ENCODE measurements at regions of chr10 and their contacts with region 1.

Region 1: GRCh38 chr10:34491678-34492077 is 323.4 kb downstream of the PARD3 start:
- DNase-seq: no peak
- ATAC-seq: no peak
- H3K4me3 ChIP-seq: no peak overlapping the region
- H3K27ac ChIP-seq: no peak overlapping the region
- H3K4me1 ChIP-seq: peaks cover 0 to 9% (median 0%) of the 10 kb centered on the region in 12 donors
- H3K27me3 ChIP-seq: no peaks in the 10 kb centered on the region
- CTCF ChIP-seq: no peak
- POLR2A ChIP-seq: no peak

Region 2: GRCh38 chr10:34384372-34384771 is 107.3 kb before region 1 on chr10:
- intact Hi-C with region 1: no loop called
- DNase-seq: no peak
- ATAC-seq: no peak
- H3K4me3 ChIP-seq: no peak overlapping the region
- H3K27ac ChIP-seq: no peak overlapping the region
- H3K4me1 ChIP-seq: peaks cover 0 to 6% (median 0%) of the 10 kb centered on the region in 12 donors
- H3K27me3 ChIP-seq: no peaks in the 10 kb centered on the region
- CTCF ChIP-seq: no peak
- POLR2A ChIP-seq: no peak

Region 3: GRCh38 chr10:34504534-34504933 is 12.9 kb after region 1 on chr10:
- intact Hi-C with region 1: loop called in 1 of 10 experiments (anchors 1 kb)
- DNase-seq: peak in 1 of 5 donors; percentile 44
- ATAC-seq: peak in 3 of 4 donors; percentile 55 to 89 (median 82)
- H3K4me3 ChIP-seq: no peak overlapping the region
- H3K27ac ChIP-seq: no peak overlapping the region
- H3K4me1 ChIP-seq: peaks cover 0 to 22% (median 4%) of the 10 kb centered on the region in 12 donors
- H3K27me3 ChIP-seq: no peaks in the 10 kb centered on the region
- CTCF ChIP-seq: no peak
- POLR2A ChIP-seq: no peak

Region 4: DNA sequence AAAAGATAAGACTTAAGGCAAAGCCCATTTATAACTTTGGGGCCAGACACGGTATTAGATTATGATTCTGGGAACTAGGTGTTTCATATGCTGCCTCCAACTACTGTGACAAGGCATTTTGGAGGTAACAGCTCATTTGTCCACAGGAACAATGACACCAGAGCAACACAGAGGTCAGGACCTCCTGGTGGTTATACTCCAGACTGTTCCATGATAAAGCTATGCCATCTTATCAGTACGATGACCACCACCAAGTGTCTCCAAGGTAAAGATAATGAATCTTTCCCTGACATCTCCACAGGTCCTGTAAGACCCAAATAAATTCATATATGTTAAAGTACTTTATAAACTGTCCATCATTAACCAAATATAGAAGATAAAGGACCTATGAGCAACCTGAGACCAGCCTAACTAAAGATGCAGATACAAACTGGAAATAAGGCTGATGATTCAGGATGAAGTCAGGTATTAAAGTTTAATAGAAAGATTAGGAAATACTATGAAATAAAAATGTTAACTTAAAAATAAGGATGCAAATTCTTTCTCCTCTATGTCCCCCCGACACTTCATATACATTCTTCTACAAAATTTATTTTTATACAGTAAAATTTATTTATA is 572.3 kb after region 1 on chr10:
- intact Hi-C with region 1: no loop called
- DNase-seq: no peak
- ATAC-seq: no peak
- H3K4me3 ChIP-seq: no peak overlapping the region
- H3K27ac ChIP-seq: no peak overlapping the region
- H3K4me1 ChIP-seq: no peaks in the 10 kb centered on the region
- H3K27me3 ChIP-seq: no peaks in the 10 kb centered on the region
- CTCF ChIP-seq: no peak
- POLR2A ChIP-seq: no peak